ENCODE measurements at regions of chr16 and their contacts with region 1.

Region 1: GRCh38 chr16:1705688-1706385 is at the start of gene MAPK8IP3:
- DNase-seq: peak; percentile 77 to 99
- H3K4me3 ChIP-seq: peak within 1 kb of the TSS; percentile 89 to 97 (median 94)
- H3K27ac ChIP-seq: peak within 1 kb of the TSS; percentile 85
- H3K4me1 ChIP-seq: peaks cover 0 to 16% (median 3%) of the 10 kb centered on the region in 4 experiments; a peak in 4 of 7 replicates
- H3K27me3 ChIP-seq: no peaks in the 10 kb centered on the region
- CTCF ChIP-seq: peak; percentile 83 to 96 (median 92)
- EP300 ChIP-seq: peak in 1 of 2 experiments; percentile 84; a peak in 2 of 3 replicates
- POLR2A ChIP-seq: peak in 1 of 2 experiments; percentile 97; a peak in 2 of 3 replicates
- RAD21 ChIP-seq: no peak; a peak in 1 of 4 replicates
- total RNA-seq, gene MAPK8IP3: 41.4 and 43.4 TPM in 2 replicates

Region 2: DNA sequence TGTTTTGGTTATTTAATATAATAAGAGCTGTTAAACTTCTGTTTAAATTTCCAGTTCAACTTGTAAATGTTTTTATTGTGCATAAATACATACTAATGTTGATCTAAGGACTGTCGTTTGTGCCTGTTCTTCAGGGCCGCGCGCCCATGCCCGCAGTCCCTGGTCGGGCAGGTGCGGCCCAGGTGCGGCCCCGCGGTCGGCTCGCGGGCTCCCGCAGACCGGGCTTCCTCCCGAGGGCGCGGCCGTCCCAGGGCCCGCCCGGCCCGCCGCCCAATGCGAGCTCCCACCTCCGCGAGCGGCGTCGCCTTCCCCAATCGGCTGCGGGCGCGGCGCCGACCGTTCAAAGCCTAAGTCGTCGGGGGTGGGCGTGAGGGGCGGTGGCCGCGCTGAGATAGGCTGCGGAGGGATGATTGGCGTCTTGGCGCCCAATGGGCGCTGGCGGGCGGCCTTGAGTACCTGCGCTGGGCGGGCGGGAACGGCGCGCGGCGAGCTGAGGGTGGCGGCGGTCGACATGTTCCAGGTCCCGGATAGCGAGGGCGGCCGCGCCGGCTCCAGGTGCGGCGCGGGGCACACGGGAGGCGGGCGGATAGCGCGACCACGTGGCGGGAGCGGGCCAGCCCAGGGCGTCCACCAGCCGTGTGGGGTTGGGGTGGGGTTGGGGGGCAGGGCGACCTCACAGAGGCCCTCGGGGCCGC is 27.9 kb before region 1 on chr16 and contains the start of gene JPT2:
- CTCF ChIA-PET with region 1: interaction called, 11 read pairs
- POLR2A ChIA-PET with region 1: interaction called, 34 read pairs
- DNase-seq: peak; percentile 88 to 95
- H3K4me3 ChIP-seq: peak within 1 kb of the TSS; percentile 87 to 99 (median 94)
- H3K27ac ChIP-seq: peak within 1 kb of the TSS; percentile 87
- H3K4me1 ChIP-seq: peaks cover 0 to 10% (median 2%) of the 10 kb centered on the region in 4 experiments; a peak in 4 of 7 replicates
- H3K27me3 ChIP-seq: no peaks in the 10 kb centered on the region
- CTCF ChIP-seq: no peak
- EP300 ChIP-seq: no peak
- POLR2A ChIP-seq: peak in 1 of 2 experiments; percentile 46; a peak in 2 of 3 replicates
- RAD21 ChIP-seq: no peak
- total RNA-seq, gene JPT2: 197 and 199 TPM in 2 replicates

Region 3: DNA sequence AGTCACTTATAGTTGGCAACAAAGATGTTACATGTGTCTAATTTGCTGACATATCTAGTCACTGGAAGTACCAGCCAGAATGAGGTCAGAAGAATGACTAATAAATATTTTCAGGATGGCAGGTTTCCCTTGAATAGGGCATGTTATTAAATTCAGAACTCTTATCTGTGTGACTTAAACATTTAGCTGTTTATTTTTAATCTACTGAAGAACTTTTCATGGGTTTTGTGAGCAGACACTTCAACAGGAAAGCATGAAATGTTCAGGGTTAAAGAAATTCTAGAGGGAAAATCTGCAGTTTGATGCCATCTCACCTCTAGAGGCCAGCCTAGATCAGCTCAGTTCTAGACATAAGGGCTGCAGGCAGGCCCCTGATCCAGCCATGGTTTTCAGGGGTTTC is 14.6 kb before region 1 on chr16:
- CTCF ChIA-PET with region 1: interaction called, 10 read pairs
- POLR2A ChIA-PET with region 1: interaction called, 7 read pairs
- DNase-seq: no peak
- H3K4me3 ChIP-seq: no peak overlapping the region
- H3K27ac ChIP-seq: no peak overlapping the region
- H3K4me1 ChIP-seq: no peaks in the 10 kb centered on the region
- H3K27me3 ChIP-seq: no peaks in the 10 kb centered on the region
- CTCF ChIP-seq: no peak
- EP300 ChIP-seq: no peak
- POLR2A ChIP-seq: no peak
- RAD21 ChIP-seq: no peak

Region 4: DNA sequence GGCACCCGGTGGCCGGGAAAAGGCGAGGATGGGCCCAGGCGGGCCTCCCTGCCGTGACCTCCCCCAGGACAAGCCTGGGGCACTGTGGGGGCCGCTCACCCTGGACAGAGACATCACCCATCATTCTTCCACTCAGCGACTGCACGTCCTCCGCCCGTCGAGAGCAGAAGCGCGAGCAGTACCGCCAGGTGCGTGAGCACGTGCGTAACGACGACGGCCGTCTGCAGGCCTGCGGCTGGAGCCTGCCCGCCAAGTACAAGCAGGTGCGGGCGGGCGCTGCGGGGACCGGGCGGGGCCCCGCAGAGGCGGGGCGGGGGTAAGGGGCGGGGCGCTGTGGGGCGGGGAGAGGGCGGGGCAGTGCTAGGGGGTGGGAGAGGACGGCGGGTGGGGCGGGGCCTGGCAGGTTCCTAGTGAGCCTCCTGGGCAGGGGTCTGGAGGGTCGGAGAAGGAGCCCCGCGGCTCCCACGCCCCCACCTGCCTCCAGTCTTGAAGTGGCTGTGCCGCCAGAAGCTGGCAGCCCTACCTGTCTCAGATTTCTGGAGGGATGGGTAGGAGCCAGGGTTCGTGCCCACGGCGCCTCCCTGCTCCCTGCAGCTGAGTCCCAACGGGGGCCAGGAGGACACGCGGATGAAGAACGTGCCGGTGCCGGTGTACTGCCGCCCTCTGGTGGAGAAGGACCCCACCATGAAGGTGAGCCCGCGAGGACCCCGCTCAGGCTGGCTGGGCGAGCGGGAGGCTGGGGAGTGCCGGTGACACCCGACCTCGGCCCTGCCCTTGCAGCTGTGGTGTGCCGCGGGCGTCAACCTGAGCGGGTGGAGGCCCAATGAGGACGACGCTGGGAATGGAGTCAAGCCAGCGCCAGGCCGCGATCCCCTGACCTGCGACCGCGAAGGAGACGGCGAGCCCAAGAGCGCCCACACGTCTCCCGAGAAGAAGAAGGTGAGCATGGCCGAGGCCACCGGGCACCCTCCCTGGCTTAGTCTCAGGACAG is 58.0 kb after region 1 on chr16:
- CTCF ChIA-PET with region 1: interaction called, 16 read pairs
- POLR2A ChIA-PET with region 1: interaction called, 9 read pairs
- DNase-seq: peak; percentile 59 to 92
- H3K4me3 ChIP-seq: peak overlapping the region; percentile 8 to 57 (median 36); a peak in 7 of 8 replicates
- H3K27ac ChIP-seq: no peak overlapping the region
- H3K4me1 ChIP-seq: peaks cover 0 to 13% (median 7%) of the 10 kb centered on the region in 4 experiments; a peak in 5 of 7 replicates
- H3K27me3 ChIP-seq: no peaks in the 10 kb centered on the region; a peak in 1 of 7 replicates
- CTCF ChIP-seq: peak in 2 of 3 experiments; percentile 66 to 82; a peak in 3 of 4 replicates
- EP300 ChIP-seq: no peak
- POLR2A ChIP-seq: no peak
- RAD21 ChIP-seq: peak; percentile 71 to 75

Region 5: GRCh38 chr16:1772736-1773584 is 67.1 kb after region 1 on chr16 and contains the starts of genes EME2 and MRPS34:
- CTCF ChIA-PET with region 1: interaction called, 4 read pairs
- POLR2A ChIA-PET with region 1: interaction called, 35 read pairs
- DNase-seq: peak; percentile 51 to 95
- H3K4me3 ChIP-seq: peak within 1 kb of the TSS; percentile 82 to 91 (median 82)
- H3K27ac ChIP-seq: peak within 1 kb of the TSS; percentile 62
- H3K4me1 ChIP-seq: peaks cover 0 to 12% (median 10%) of the 10 kb centered on the region in 4 experiments; a peak in 5 of 7 replicates
- H3K27me3 ChIP-seq: no peaks in the 10 kb centered on the region
- CTCF ChIP-seq: peak in 2 of 3 experiments; percentile 70 to 80; a peak in 3 of 4 replicates
- EP300 ChIP-seq: no peak
- POLR2A ChIP-seq: peak in 1 of 2 experiments; percentile 44; a peak in 1 of 3 replicates
- RAD21 ChIP-seq: peak; percentile 27 to 50; a peak in 3 of 4 replicates
- total RNA-seq, gene EME2: 19.3 and 19.7 TPM in 2 replicates
- total RNA-seq, gene MRPS34: 252 and 267 TPM in 2 replicates

Region 6: DNA sequence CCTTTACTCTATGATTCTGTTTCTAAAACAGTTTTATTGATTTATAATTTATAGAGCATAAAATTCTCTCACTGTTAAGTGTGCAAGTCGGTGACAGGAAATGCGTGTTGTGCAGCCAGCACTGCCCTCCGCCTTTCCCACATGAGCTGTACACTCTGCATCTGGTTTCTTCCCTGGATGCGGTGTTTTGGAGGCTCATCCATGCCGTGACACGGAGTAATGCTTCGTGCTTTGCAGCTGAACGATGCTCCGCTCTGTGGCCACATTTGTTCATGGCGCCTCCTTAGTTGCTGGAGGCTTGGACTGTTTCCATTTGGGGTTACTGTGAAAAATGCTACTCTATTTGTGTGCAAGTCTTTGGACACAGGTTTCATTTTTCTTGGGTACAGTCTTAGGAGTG is 94.9 kb after region 1 on chr16:
- CTCF ChIA-PET with region 1: no interaction called
- POLR2A ChIA-PET with region 1: no interaction called
- DNase-seq: no peak
- H3K4me3 ChIP-seq: no peak overlapping the region
- H3K27ac ChIP-seq: no peak overlapping the region
- H3K4me1 ChIP-seq: no peaks in the 10 kb centered on the region
- H3K27me3 ChIP-seq: no peaks in the 10 kb centered on the region
- CTCF ChIP-seq: no peak
- EP300 ChIP-seq: no peak
- POLR2A ChIP-seq: no peak
- RAD21 ChIP-seq: no peak

Measured in H1 (cell line).